ENCODE measurements at regions of chr1 and their contacts with region 1.

Region 1: GRCh38 chr1:87457408-87457807 is 128.7 kb downstream of the LMO4 start:
- DNase-seq: no peak
- ATAC-seq: no peak
- H3K4me3 ChIP-seq: no peak overlapping the region
- H3K4me3 Mint-ChIP-seq: no peak overlapping the region
- H3K27ac ChIP-seq: no peak overlapping the region
- H3K27ac Mint-ChIP-seq: no peak overlapping the region
- H3K4me1 ChIP-seq: no peaks in the 10 kb centered on the region
- H3K4me1 Mint-ChIP-seq: peaks cover 4% of the 10 kb centered on the region
- H3K27me3 ChIP-seq: no peaks in the 10 kb centered on the region
- H3K27me3 Mint-ChIP-seq: no peaks in the 10 kb centered on the region
- CTCF ChIP-seq: no peak

Region 2: DNA sequence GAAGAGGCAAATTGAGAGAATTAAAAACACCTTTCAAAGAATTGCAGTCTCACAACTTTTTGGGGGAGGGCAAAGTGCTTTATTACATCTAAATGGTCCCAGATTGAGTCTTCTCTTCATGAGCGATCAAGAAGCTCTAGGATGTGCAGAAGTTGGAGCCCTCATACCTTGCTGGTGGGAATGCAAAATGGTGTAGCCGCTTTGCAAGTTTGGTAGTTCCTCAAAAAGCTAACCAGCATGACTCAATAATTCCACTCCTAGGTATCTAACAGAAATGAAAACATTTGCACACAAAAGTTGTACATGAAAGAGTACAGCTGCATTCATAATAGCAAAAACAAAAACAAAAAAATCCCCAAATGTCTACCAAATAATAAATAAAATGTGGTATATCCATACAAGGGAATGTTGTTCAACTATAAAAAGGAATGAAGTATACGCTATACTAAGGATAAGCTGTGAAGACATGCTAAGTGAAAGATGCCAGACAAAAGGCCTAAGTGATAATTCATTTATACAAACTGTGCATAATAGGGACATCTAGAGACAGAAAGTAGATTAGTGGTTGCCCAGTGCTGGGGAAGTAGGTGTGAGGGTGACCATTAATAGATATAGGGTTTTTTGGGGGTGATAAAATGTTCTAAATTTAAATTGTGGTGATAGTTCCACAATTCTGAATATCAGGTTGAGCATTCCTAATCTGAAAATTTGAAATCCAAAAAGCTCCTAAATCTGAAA is 598.7 kb before region 1 on chr1:
- CTCF ChIA-PET with region 1: no interaction called
- POLR2A ChIA-PET with region 1: interaction called, 11 read pairs
- intact Hi-C with region 1: no loop called
- DNase-seq: no peak
- ATAC-seq: peak; percentile 68
- H3K4me3 ChIP-seq: no peak overlapping the region
- H3K4me3 Mint-ChIP-seq: no peak overlapping the region
- H3K27ac ChIP-seq: peak overlapping the region in 1 of 2 donors; percentile 42
- H3K27ac Mint-ChIP-seq: peak overlapping the region; percentile 71
- H3K4me1 ChIP-seq: peaks cover 6 to 14% of the 10 kb centered on the region in 2 donors
- H3K4me1 Mint-ChIP-seq: peaks cover 37% of the 10 kb centered on the region
- H3K27me3 ChIP-seq: no peaks in the 10 kb centered on the region
- H3K27me3 Mint-ChIP-seq: no peaks in the 10 kb centered on the region
- CTCF ChIP-seq: no peak

Region 3: GRCh38 chr1:86981482-86982213 is 475.8 kb before region 1 on chr1:
- CTCF ChIA-PET with region 1: no interaction called
- POLR2A ChIA-PET with region 1: no interaction called
- intact Hi-C with region 1: no loop called
- DNase-seq: no peak
- ATAC-seq: no peak
- H3K4me3 ChIP-seq: no peak overlapping the region
- H3K4me3 Mint-ChIP-seq: no peak overlapping the region
- H3K27ac ChIP-seq: no peak overlapping the region
- H3K27ac Mint-ChIP-seq: no peak overlapping the region
- H3K4me1 ChIP-seq: no peaks in the 10 kb centered on the region
- H3K4me1 Mint-ChIP-seq: peaks cover 1% of the 10 kb centered on the region
- H3K27me3 ChIP-seq: no peaks in the 10 kb centered on the region
- H3K27me3 Mint-ChIP-seq: no peaks in the 10 kb centered on the region
- CTCF ChIP-seq: no peak

Region 4: GRCh38 chr1:87765681-87766070 is 308.3 kb after region 1 on chr1:
- CTCF ChIA-PET with region 1: no interaction called
- POLR2A ChIA-PET with region 1: no interaction called
- intact Hi-C with region 1: no loop called
- DNase-seq: no peak
- ATAC-seq: no peak
- H3K4me3 ChIP-seq: no peak overlapping the region
- H3K4me3 Mint-ChIP-seq: no peak overlapping the region
- H3K27ac ChIP-seq: no peak overlapping the region
- H3K27ac Mint-ChIP-seq: no peak overlapping the region
- H3K4me1 ChIP-seq: peaks cover 5% of the 10 kb centered on the region in 2 donors
- H3K4me1 Mint-ChIP-seq: peaks cover 14% of the 10 kb centered on the region
- H3K27me3 ChIP-seq: no peaks in the 10 kb centered on the region
- H3K27me3 Mint-ChIP-seq: no peaks in the 10 kb centered on the region
- CTCF ChIP-seq: no peak